AG04450 (cell line): ENCODE measurements at regions of chr17 and their contacts with region 1.

Region 1: GRCh38 chr17:40113110-40113906 is 8.5 kb upstream of the MSL1 start:
- DNase-seq: peak; percentile 87
- H3K4me3 ChIP-seq: peak overlapping the region; percentile 54
- H3K27ac ChIP-seq: peak overlapping the region; percentile 84
- H3K27me3 ChIP-seq: no peaks in the 10 kb centered on the region
- CTCF ChIP-seq: peak; percentile 84

Region 2: GRCh38 chr17:40004712-40005111 is 108.6 kb before region 1 on chr17:
- CTCF ChIA-PET with region 1: no interaction called
- POLR2A ChIA-PET with region 1: no interaction called
- DNase-seq: no peak
- H3K4me3 ChIP-seq: no peak overlapping the region
- H3K27ac ChIP-seq: no peak overlapping the region
- H3K27me3 ChIP-seq: peaks cover 2% of the 10 kb centered on the region
- CTCF ChIP-seq: no peak

Region 3: DNA sequence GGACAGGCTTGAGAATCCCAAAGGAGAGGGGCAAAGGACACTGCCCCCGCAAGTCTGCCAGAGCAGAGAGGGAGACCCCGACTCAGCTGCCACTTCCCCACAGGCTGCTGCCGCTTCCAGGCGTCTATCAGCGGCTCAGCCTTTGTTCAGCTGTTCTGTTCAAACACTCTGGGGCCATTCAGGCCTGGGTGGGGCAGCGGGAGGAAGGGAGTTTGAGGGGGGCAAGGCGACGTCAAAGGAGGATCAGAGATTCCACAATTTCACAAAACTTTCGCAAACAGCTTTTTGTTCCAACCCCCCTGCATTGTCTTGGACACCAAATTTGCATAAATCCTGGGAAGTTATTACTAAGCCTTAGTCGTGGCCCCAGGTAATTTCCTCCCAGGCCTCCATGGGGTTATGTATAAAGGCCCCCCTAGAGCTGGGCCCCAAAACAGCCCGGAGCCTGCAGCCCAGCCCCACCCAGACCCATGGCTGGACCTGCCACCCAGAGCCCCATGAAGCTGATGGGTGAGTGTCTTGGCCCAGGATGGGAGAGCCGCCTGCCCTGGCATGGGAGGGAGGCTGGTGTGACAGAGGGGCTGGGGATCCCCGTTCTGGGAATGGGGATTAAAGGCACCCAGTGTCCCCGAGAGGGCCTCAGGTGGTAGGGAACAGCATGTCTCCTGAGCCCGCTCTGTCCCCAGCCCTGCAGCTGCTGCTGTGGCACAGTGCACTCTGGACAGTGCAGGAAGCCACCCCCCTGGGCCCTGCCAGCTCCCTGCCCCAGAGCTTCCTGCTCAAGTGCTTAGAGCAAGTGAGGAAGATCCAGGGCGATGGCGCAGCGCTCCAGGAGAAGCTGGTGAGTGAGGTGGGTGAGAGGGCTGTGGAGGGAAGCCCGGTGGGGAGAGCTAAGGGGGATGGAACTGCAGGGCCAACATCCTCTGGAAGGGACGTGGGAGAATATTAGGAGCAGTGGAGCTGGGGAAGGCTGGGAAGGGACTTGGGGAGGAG is 98.0 kb before region 1 on chr17 and contains the start of gene CSF3:
- CTCF ChIA-PET with region 1: interaction called, 24 read pairs
- POLR2A ChIA-PET with region 1: interaction called, 5 read pairs
- DNase-seq: no peak
- H3K4me3 ChIP-seq: no peak within 1 kb of the TSS
- H3K27ac ChIP-seq: peak within 1 kb of the TSS; percentile 2
- H3K27me3 ChIP-seq: no peaks in the 10 kb centered on the region
- CTCF ChIP-seq: no peak
- polyA plus RNA-seq, gene CSF3: 0.05 TPM in 1 of 2 replicates, not detected in the other

Region 4: DNA sequence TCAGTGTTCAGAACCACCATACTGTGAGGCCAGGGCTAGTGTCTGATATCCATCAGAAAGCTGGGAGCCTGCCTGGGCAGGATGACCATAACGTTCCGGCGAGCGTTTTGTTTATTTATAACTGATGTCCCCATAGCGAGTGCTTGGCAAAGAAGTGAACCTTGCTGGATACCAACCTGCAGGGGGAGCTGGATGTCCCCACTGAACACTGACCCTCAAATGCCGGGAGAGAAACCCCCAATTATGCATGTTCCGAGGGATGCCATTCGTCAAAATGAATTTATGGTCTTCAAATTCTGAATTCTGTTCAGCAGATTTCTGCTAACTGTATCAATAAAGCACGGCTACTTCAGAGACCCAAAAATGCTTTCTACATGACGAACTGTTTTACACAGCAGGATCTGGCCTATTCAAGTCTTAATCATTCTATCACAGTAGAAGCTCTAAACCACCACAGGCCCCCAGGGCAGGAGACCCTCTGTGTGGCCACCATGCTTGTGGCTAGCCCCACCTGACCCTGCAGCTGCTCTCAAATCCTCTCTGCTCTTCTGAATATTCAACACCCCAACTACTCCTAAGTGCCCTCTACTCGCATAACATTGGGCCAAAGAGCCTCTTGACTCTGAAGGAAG is 74.3 kb before region 1 on chr17:
- CTCF ChIA-PET with region 1: interaction called, 21 read pairs
- POLR2A ChIA-PET with region 1: no interaction called
- DNase-seq: peak; percentile 66
- H3K4me3 ChIP-seq: no peak overlapping the region; the same call in 1 of the 2 replicates
- H3K27ac ChIP-seq: peak overlapping the region; percentile 52
- H3K27me3 ChIP-seq: no peaks in the 10 kb centered on the region
- CTCF ChIP-seq: peak; percentile 87

Region 5: GRCh38 chr17:40086150-40087044 is 26.9 kb before region 1 on chr17:
- CTCF ChIA-PET with region 1: interaction called, 15 read pairs
- POLR2A ChIA-PET with region 1: no interaction called
- DNase-seq: no peak
- H3K4me3 ChIP-seq: no peak overlapping the region
- H3K27ac ChIP-seq: no peak overlapping the region
- H3K27me3 ChIP-seq: no peaks in the 10 kb centered on the region
- CTCF ChIP-seq: peak; percentile 81

Region 6: DNA sequence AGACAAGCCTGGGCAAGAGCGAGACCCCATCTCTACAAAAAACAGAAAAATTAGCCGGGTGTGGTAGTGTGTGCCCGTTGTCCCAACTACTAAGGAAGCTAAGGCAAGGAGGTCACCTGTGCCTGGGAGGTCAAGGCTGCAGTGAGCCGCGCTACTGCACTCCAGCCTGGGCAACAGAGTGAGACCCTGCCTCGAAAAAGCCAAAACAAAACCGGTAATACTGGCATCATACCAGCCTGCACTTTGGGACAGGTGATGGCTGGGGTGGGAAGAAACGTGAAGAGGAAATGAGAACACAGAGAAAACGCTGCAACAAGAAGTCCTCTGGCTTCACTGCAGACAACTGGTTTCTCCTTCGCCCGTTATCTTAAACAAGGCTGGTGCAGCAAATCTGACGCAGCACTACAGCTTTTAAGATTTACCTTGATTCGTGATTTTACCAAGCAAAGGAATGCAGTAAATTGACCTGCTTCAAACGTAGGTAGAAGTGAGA is 26.3 kb after region 1 on chr17:
- CTCF ChIA-PET with region 1: interaction called, 14 read pairs
- POLR2A ChIA-PET with region 1: interaction called, 23 read pairs
- DNase-seq: no peak
- H3K4me3 ChIP-seq: peak overlapping the region; percentile 51
- H3K27ac ChIP-seq: peak overlapping the region; percentile 63
- H3K27me3 ChIP-seq: no peaks in the 10 kb centered on the region
- CTCF ChIP-seq: no peak

Region 7: DNA sequence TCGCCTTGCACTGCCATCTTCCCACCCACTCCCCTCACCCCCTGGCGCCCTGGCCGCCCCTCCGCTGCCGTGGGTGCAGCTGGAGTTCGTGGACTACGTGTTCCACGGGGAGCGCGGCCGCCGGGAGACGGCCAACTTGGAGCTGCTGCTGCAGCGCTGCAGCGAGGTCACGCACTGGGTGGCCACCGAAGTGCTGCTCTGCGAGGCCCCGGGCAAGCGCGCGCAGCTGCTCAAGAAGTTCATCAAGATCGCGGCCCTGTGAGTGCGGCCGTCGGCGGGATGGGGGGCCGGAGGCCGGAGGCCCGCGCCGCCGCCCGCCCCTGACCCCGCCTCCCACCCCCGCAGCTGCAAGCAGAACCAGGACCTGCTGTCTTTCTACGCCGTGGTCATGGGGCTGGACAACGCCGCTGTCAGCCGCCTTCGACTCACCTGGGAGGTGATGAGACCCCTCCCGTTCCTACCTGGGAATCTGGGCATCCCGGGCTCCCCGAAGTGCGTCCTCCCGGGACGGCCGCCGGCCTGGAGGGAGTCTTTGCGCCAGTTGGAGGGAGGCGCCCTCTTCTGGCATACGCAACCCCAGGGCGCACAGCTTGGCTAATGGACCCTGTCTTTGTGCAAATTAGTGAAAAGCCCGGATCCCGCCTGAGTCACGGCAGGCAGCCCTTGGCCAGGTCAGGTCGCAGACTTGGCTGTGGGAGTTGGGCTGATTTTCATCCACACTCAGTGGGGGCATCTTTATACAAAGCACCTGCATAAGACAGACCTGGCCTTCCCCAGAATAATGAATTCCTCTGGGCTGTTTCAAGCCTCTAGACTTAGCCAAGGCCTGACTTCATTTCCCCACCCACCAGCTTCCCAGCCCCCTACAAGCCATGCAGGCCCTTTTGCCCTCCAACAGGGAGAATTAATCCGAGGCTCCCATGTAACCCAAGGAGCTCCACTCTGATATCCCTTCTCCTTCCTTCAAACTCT is 78.2 kb after region 1 on chr17:
- CTCF ChIA-PET with region 1: interaction called, 23 read pairs
- POLR2A ChIA-PET with region 1: no interaction called
- DNase-seq: no peak
- H3K4me3 ChIP-seq: peak overlapping the region; percentile 61
- H3K27ac ChIP-seq: peak overlapping the region; percentile 61
- H3K27me3 ChIP-seq: no peaks in the 10 kb centered on the region
- CTCF ChIP-seq: peak; percentile 76